BJ (cell line): ENCODE measurements at regions of chr5 and their contacts with region 1.

Region 1: GRCh38 chr5:137201876-137202275 is 297.2 kb downstream of the SPOCK1 start:
- DNase-seq: no peak
- H3K4me3 ChIP-seq: no peak overlapping the region
- H3K27me3 ChIP-seq: no peaks in the 10 kb centered on the region; the same call in 1 of the 2 replicates
- CTCF ChIP-seq: peak; percentile 25; the same call in 1 of the 2 replicates

Region 2: GRCh38 chr5:137122075-137122474 is 79.8 kb before region 1 on chr5:
- CTCF ChIA-PET with region 1: no interaction called
- POLR2A ChIA-PET with region 1: no interaction called
- DNase-seq: no peak
- H3K4me3 ChIP-seq: no peak overlapping the region
- H3K27me3 ChIP-seq: no peaks in the 10 kb centered on the region
- CTCF ChIP-seq: no peak

Region 3: DNA sequence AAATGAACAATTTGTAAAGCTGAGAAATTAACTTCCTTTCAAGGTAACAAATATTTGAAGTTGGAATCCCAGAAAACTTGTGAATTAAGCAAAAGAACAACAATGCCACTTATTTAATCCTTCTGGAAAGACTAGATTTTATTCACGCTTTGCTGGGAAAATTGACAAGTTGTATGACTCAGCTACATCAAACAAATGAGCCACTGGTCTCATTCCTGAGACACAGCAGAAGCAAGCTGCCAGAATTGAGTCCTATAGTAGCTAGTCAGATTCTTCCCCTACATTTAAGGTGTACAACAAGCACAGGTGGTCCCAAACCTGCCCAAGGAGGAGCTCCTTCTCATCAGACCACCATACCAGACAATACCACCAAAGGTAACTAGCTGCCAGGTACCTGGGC is 16.6 kb after region 1 on chr5:
- CTCF ChIA-PET with region 1: interaction called, 16 read pairs
- POLR2A ChIA-PET with region 1: no interaction called
- DNase-seq: no peak
- H3K4me3 ChIP-seq: no peak overlapping the region
- H3K27me3 ChIP-seq: no peaks in the 10 kb centered on the region
- CTCF ChIP-seq: no peak